MCF 10A (cell line): ENCODE measurements at regions of chr7 and their contacts with region 1.

Region 1: GRCh38 chr7:142459551-142459963 is 201.7 kb upstream of the PRSS58 start:
- DNase-seq: peak; percentile 82
- H3K4me3 Mint-ChIP-seq: no peak overlapping the region
- H3K27ac Mint-ChIP-seq: no peak overlapping the region
- H3K4me1 Mint-ChIP-seq: peaks cover 10% of the 10 kb centered on the region
- H3K27me3 Mint-ChIP-seq: peaks cover 42% of the 10 kb centered on the region
- CTCF ChIP-seq: peak; percentile 65

Region 2: GRCh38 chr7:142412551-142413193 is 46.9 kb before region 1 on chr7:
- CTCF ChIA-PET with region 1: interaction called, 13 read pairs
- POLR2A ChIA-PET with region 1: no interaction called
- intact Hi-C with region 1: no loop called
- DNase-seq: peak; percentile 66
- H3K4me3 Mint-ChIP-seq: no peak overlapping the region
- H3K27ac Mint-ChIP-seq: no peak overlapping the region
- H3K4me1 Mint-ChIP-seq: no peaks in the 10 kb centered on the region
- H3K27me3 Mint-ChIP-seq: no peaks in the 10 kb centered on the region
- CTCF ChIP-seq: peak; percentile 29

Region 3: DNA sequence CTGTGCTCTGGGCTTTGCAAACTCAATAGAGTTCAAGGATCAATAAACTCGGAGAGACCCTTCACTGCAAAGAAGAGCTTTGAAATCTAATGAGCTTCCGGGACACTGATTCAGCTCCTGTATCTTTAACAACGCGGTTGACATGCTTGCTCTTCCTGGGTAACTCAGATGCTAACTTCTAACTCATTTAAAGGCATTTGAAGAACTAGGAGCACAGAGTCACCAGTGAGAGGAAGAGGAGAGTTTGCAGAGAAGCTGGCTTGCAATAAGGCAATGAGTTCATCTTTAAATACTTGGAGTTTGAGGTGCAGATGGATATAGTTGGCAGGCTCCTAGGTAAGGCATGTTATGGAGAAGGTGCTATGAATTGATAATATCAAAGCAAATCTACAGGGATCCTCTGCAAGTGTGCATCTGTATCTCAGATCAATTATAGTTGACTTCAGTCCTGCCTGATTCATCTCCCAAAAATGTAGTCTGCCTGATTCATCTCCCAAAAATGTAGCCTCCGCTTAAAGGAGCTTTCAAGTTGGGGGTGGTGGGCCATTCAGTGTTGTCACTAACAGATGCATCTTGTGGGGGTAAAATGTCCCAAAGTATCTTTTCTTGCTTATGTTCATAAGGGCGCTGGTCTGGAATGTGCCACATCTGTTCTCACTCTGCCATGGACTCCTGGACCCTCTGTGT is 19.2 kb before region 1 on chr7:
- CTCF ChIA-PET with region 1: interaction called, 11 read pairs
- POLR2A ChIA-PET with region 1: no interaction called
- intact Hi-C with region 1: no loop called
- DNase-seq: peak; percentile 56
- H3K4me3 Mint-ChIP-seq: no peak overlapping the region
- H3K27ac Mint-ChIP-seq: no peak overlapping the region
- H3K4me1 Mint-ChIP-seq: peaks cover 14% of the 10 kb centered on the region
- H3K27me3 Mint-ChIP-seq: peaks cover 13% of the 10 kb centered on the region
- CTCF ChIP-seq: no peak

Region 4: GRCh38 chr7:142516038-142516501 is 56.5 kb after region 1 on chr7:
- CTCF ChIA-PET with region 1: interaction called, 35 read pairs
- POLR2A ChIA-PET with region 1: no interaction called
- intact Hi-C with region 1: no loop called
- DNase-seq: peak; percentile 81
- H3K4me3 Mint-ChIP-seq: no peak overlapping the region
- H3K27ac Mint-ChIP-seq: no peak overlapping the region
- H3K4me1 Mint-ChIP-seq: peaks cover 20% of the 10 kb centered on the region
- H3K27me3 Mint-ChIP-seq: no peaks in the 10 kb centered on the region
- CTCF ChIP-seq: peak; percentile 80

Region 5: GRCh38 chr7:142542942-142543341 is 83.4 kb after region 1 on chr7:
- CTCF ChIA-PET with region 1: no interaction called
- POLR2A ChIA-PET with region 1: no interaction called
- intact Hi-C with region 1: no loop called
- DNase-seq: peak; percentile 28
- H3K4me3 Mint-ChIP-seq: no peak overlapping the region
- H3K27ac Mint-ChIP-seq: no peak overlapping the region
- H3K4me1 Mint-ChIP-seq: peaks cover 17% of the 10 kb centered on the region
- H3K27me3 Mint-ChIP-seq: no peaks in the 10 kb centered on the region
- CTCF ChIP-seq: no peak